Mammary epithelial cell (primary cell): ENCODE measurements at regions of chr22 and their contacts with region 1.

Region 1: DNA sequence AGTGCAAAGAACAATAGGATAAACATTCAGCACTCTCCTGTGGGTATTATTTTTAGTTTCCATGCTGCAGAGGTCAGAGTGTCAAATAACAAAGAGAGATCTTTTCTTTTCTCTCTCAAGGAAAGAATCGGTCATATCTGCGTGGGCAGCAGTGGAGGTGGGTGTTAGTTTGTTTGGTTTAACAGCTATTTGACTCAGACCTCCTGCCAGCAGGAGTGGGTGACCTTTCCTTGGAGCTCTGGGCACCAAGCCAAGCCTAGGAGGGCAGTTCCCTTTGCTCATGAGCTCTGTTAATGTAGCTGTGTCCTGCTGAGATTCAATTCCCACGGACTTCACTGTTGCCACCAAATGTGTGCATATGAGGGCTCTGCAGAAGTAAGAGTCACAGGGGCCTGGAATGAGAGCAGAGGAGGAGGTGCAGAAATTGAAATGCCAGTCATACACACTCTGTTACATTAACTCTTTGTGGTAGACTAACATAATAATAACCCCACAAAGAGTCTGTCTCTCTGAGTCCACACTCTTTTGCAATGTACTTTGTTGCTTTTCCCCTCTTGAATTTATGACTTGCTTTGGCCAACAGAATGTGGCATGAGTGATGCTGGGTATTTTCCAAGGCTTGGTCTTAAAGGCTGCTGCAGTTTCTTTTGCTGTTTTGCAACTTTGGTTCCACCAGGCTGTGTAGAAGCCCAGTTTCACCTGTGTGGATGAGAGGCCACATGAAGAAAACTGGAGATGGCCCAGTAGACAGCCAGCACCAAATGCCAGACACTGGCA is 76.0 kb upstream of the GRK3 start:
- DNase-seq: peak; percentile 79
- H3K4me3 ChIP-seq: no peak overlapping the region
- H3K27ac ChIP-seq: no peak overlapping the region
- H3K4me1 ChIP-seq: peaks cover 4% of the 10 kb centered on the region
- H3K27me3 ChIP-seq: no peaks in the 10 kb centered on the region
- CTCF ChIP-seq: no peak

Region 2: GRCh38 chr22:25525376-25525775 is 36.9 kb after region 1 on chr22:
- CTCF ChIA-PET with region 1: no interaction called
- dilution Hi-C with region 1: no loop called
- in situ Hi-C with region 1: no loop called
- intact Hi-C with region 1: no loop called
- DNase-seq: no peak
- H3K4me3 ChIP-seq: no peak overlapping the region
- H3K27ac ChIP-seq: no peak overlapping the region
- H3K4me1 ChIP-seq: peaks cover 4% of the 10 kb centered on the region
- H3K27me3 ChIP-seq: no peaks in the 10 kb centered on the region
- CTCF ChIP-seq: no peak

Region 3: GRCh38 chr22:25554238-25554671 is 65.8 kb after region 1 on chr22:
- CTCF ChIA-PET with region 1: no interaction called
- dilution Hi-C with region 1: loop called (anchors 5 kb)
- in situ Hi-C with region 1: no loop called
- intact Hi-C with region 1: no loop called
- DNase-seq: no peak
- H3K4me3 ChIP-seq: no peak overlapping the region
- H3K27ac ChIP-seq: no peak overlapping the region
- H3K4me1 ChIP-seq: no peaks in the 10 kb centered on the region
- H3K27me3 ChIP-seq: no peaks in the 10 kb centered on the region
- CTCF ChIP-seq: no peak